ENCODE measurements at regions of chr7 and their contacts with region 1.

Region 1: DNA sequence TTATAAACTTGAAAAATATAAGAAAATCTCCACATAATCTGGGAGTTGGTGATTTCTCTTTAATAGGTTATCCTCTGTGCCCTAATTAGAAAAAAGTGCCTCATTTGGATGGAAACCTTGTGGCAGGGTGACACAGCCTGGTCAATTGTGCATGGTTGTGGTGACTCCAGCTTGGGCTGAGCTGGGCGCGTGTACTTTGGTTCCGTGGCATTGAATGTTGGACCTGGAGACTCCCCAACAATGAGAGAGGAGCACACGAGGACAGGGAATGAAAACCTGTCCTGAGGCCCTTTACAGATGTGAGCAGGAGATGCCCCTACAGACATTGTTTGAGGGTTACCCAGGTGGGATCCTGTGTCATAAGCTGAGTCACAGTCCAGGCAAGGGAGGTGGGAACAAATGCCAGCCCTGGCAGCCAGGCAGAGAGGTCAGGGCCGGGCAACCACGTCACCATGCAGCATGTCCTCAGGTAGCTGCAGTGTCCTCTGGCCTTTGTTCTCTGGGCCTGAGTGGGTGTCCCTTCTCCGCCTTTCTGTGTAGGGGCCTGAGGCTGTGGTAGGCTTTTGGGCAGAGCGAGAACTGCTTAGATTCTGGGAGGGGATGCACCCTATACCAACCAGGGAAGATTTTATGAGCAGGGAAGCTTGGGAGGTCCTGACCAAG is 147.4 kb upstream of the TBX20 start:
- DNase-seq: no peak

Region 2: GRCh38 chr7:35366167-35367155 is 34.9 kb before region 1 on chr7:
- intact Hi-C with region 1: loop called in 1 of 2 experiments (anchors 1 kb)
- DNase-seq: no peak

Region 3: DNA sequence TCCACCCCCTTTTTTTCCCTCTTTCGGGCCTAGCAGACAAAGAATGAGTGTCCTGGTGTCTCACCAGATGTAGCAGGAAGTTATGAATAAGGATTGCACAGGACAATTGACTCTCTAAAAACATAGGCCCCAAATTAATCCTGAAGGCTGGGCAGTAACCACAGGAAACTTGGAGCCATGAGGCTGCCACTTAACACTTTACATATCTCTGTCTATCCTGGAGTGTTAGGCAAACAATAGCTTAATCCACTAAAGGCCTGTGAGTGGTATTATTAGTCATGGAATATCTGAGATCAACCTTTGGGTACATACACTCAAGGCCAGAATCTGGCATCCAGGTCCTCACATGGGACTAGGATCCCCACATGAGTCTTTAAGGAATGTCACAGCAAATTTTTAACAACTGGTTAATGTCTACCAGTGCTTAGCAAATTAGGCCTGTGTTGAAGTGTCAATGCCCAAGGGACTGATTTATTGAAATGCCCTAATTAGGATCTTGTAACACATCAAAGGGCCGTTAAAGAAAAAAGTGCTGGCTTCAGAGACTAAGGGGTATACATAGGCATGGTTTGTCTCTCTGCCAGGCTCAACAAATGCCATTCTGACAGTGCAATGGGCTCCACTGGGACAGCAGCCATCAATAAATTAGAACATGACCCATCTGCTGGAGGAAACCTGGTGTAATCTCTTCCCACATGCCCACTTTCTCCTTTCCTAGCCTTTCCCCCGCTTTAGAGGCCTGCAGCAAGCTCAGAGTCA is 49.3 kb after region 1 on chr7:
- intact Hi-C with region 1: no loop called
- DNase-seq: no peak

Region 4: GRCh38 chr7:36943591-36944435 is 1542.5 kb after region 1 on chr7:
- intact Hi-C with region 1: no loop called
- DNase-seq: no peak